Ascending aorta (tissue), 2 donors: ENCODE measurements at regions of chr1 and their contacts with region 1.

Region 1: GRCh38 chr1:111755331-111756123 is at the start of gene DDX20:
- DNase-seq: peak; percentile 65 to 95
- H3K4me3 ChIP-seq: peak within 1 kb of the TSS; percentile 80 to 96
- H3K27ac ChIP-seq: peak within 1 kb of the TSS; percentile 90 to 95
- H3K4me1 ChIP-seq: peaks cover 0 to 16% of the 10 kb centered on the region in 2 donors
- H3K27me3 ChIP-seq: no peaks in the 10 kb centered on the region
- CTCF ChIP-seq: peak; percentile 92 to 98 (median 92)
- total RNA-seq, gene DDX20: 11.3 TPM

Region 2: GRCh38 chr1:111139956-111140679 is 615.4 kb before region 1 on chr1 and contains the starts of genes CEPT1 and DRAM2:
- intact Hi-C with region 1: loop called (anchors 10 kb)
- DNase-seq: peak; percentile 84 to 98
- H3K4me3 ChIP-seq: peak within 1 kb of the TSS; percentile 84 to 97
- H3K27ac ChIP-seq: peak within 1 kb of the TSS; percentile 90 to 98
- H3K4me1 ChIP-seq: peaks cover 0 to 15% of the 10 kb centered on the region in 2 donors
- H3K27me3 ChIP-seq: no peaks in the 10 kb centered on the region
- CTCF ChIP-seq: no peak
- total RNA-seq, gene CEPT1: 6.6 TPM
- total RNA-seq, gene DRAM2: 60.2 TPM

Region 3: DNA sequence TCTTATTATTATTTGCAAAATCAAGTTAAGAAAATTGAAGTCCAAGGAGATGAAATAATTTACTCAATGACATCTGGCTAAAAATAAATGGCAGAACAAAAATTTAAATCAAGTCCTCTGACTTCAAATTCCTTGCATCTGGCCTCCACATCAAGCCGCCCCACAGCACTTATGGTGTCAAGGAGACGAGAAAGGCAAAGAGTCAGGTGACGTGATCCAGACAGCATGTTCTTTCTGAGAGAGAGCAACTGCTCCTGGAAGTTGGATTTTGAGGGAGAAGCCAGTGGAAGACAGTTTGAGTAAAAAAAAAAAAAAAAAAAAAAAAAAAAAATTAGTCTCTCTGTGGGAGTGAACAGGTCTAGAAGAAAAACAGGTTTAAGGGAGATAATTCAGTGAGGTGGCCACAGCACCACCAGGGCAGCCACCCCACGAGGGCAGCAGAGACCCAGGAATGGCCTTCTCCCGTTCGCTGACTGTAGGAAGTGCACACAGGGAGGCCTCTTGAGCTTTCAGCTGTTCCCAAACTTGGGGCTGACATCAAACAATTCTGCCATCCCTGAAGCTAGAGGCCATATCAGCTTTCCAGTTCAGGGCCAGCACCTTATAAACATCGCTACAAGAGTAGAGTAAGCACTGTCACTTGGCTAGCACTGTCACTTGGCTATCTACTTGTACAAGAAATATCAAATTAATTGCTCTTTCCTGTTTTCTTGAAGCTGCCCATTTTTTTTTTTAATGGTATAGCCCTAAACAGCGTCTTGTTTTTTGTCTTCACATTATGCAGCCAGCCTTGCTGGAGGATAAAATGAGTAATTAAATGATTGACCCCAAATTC is 273.9 kb before region 1 on chr1:
- intact Hi-C with region 1: loop called (anchors 1 kb)
- DNase-seq: peak in 1 of 2 donors; percentile 88
- H3K4me3 ChIP-seq: no peak overlapping the region
- H3K27ac ChIP-seq: no peak overlapping the region
- H3K4me1 ChIP-seq: peaks cover 0 to 7% of the 10 kb centered on the region in 2 donors
- H3K27me3 ChIP-seq: no peaks in the 10 kb centered on the region
- CTCF ChIP-seq: peak; percentile 69 to 78 (median 75)

Region 4: DNA sequence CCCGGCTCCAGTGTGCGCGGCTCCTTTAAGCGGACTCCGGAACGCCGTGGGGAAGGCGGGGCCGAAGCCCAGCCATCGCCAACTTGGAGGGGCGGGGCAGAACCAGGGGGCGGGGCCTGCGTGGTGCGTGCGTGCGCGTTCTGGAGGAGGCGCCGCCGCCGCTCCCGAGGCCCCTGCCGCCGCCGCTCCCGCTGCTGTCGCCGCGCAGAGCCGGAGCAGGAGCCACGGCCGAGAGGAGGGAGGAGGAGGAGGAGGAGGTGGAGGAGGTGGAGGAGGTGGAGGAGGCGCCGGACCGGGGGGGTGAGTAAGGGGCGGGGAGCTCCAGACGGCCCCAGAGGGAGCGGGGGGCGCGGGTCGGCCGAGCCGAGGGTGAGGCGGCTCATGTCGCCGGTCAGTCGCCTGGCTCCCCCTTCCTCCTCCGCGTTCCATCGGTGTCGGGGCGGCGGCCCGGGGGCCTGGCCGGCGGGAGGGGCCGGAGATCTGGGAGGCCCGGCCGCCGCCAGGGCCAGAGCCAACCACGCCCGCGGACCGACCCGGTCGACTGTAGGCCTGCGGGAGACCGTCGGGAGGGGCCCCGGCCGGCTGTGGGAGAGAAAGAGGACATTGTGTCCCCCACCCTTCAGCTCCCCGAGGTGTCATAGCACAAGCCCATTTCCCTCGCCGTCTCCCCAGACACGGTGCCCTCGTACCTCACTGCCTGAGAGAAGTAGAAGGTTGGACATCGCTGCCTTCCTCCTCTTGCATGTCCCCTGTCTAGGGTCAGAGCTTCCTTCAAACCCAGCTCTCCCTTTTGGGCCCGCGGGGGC is 135.7 kb before region 1 on chr1 and contains the start of gene RAP1A:
- intact Hi-C with region 1: loop called (anchors 1 kb)
- DNase-seq: peak; percentile 69 to 97
- H3K4me3 ChIP-seq: peak within 1 kb of the TSS; percentile 92 to 96
- H3K27ac ChIP-seq: peak within 1 kb of the TSS; percentile 98 to 99
- H3K4me1 ChIP-seq: peaks cover 10 to 26% of the 10 kb centered on the region in 2 donors
- H3K27me3 ChIP-seq: no peaks in the 10 kb centered on the region
- CTCF ChIP-seq: no peak
- total RNA-seq, gene RAP1A: 44.1 TPM

Region 5: DNA sequence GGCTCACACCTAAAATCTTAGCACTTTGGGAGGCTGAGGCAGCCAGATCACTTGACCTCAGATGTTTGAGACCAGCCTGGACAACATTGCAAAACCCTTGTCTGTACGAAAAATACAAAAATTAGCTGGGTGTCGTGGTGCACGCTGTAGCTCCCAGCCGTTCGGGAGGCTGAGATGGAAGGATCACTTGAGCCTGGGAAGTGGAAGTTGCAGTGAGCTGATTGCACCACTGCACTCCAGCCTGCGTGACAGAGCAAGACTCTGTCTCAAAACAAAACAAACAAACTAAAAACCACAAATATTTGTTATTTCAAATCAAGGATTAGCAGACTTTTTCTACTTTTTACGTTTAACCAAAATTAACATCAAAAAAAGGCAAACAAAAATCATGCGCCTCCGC is 47.6 kb before region 1 on chr1:
- intact Hi-C with region 1: no loop called
- DNase-seq: no peak
- H3K4me3 ChIP-seq: no peak overlapping the region
- H3K27ac ChIP-seq: no peak overlapping the region
- H3K4me1 ChIP-seq: no peaks in the 10 kb centered on the region
- H3K27me3 ChIP-seq: no peaks in the 10 kb centered on the region
- CTCF ChIP-seq: no peak

Region 6: DNA sequence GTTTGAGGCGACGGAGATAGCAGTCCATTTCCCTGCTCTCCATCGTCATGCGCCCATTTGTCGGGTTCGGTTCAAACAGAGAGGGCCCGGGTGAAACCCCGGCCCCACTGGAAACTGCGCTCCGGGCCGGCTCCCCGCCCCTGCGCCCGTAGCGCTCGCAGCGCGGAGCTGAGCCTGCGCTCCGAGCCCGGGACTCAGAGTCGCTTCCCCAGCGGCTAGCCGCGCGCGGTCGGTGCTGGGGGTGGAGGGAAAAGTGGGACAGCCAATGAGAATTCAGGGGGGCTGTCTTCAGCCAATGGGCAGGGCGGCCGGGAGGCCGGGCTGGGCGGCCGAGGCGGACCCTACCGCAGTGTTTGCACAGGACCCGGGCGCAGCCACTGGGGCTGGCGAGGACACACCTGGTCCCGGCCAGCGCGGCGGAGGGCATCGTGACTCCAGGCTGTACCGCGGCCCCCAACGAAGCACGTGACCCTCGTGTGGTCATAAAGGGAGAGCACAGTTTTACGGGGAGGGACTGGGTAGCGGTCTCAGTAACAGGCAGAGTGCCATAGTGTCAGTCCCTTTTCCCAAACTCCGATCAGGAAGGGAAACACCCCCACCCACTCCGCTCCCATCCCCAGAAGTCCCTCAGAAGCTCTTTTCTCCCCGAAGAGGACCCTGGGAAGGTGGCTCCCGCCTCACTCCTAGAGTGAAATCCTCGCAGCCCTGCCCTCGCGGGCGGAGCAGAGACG is 16.2 kb before region 1 on chr1 and contains the start of gene INKA2:
- intact Hi-C with region 1: loop called (anchors 1 kb)
- DNase-seq: peak; percentile 77 to 93
- H3K4me3 ChIP-seq: peak within 1 kb of the TSS; percentile 78 to 88
- H3K27ac ChIP-seq: peak within 1 kb of the TSS; percentile 95
- H3K4me1 ChIP-seq: peaks cover 0 to 14% of the 10 kb centered on the region in 2 donors
- H3K27me3 ChIP-seq: no peaks in the 10 kb centered on the region
- CTCF ChIP-seq: peak in 1 of 3 experiments; percentile 25
- total RNA-seq, gene INKA2: not detected

Region 7: DNA sequence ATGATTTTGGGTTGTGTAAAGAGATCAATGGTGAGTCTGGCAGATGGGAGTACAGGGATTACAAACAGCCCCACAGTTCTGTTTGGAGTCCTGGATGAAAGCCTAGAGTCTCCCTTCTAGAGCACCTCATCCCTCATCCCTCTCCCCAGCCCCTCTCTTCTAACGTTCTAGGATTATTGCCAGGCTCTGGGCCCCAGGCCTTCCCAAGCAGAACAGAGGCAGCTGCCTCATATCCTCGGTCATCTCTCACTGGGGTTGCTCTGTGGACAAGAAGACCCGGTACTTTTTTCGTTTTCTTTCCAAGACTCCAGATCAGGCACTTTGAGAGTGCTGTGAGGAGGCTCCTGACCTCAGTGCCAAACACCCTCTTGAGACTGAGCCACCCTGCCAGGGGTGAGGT is 250.9 kb after region 1 on chr1:
- intact Hi-C with region 1: no loop called
- DNase-seq: no peak
- H3K4me3 ChIP-seq: no peak overlapping the region
- H3K27ac ChIP-seq: no peak overlapping the region
- H3K4me1 ChIP-seq: no peaks in the 10 kb centered on the region
- H3K27me3 ChIP-seq: no peaks in the 10 kb centered on the region
- CTCF ChIP-seq: no peak